ENCODE measurements at regions of chr7 and their contacts with region 1.

Region 1: GRCh38 chr7:74494076-74494548 is 40.4 kb downstream of the GTF2IRD1 start:
- DNase-seq: peak; percentile 65
- ATAC-seq: peak; percentile 84
- H3K4me3 ChIP-seq: peak overlapping the region in 2 of 3 experiments; percentile 2 to 48; a peak in 2 of 6 replicates
- H3K27ac ChIP-seq: peak overlapping the region; percentile 92
- H3K4me1 ChIP-seq: peaks cover 32% of the 10 kb centered on the region
- H3K27me3 ChIP-seq: no peaks in the 10 kb centered on the region
- CTCF ChIP-seq: no peak
- EP300 ChIP-seq: peak in 1 of 2 experiments; percentile 20; a peak in 1 of 4 replicates
- POLR2A ChIP-seq: no peak
- RAD21 ChIP-seq: 0 out of 2 replicates have a peak, but pooled peaks have one; percentile 15

Region 2: GRCh38 chr7:74455291-74455804 is 38.8 kb before region 1 on chr7:
- CTCF ChIA-PET with region 1: no interaction called
- POLR2A ChIA-PET with region 1: no interaction called
- in situ Hi-C with region 1: no loop called
- intact Hi-C with region 1: loop called (anchors 1 kb)
- DNase-seq: peak; percentile 56
- ATAC-seq: peak; percentile 55
- H3K4me3 ChIP-seq: peak overlapping the region; percentile 59 to 86 (median 66)
- H3K27ac ChIP-seq: peak overlapping the region; percentile 73
- H3K4me1 ChIP-seq: peaks cover 29% of the 10 kb centered on the region
- H3K27me3 ChIP-seq: no peaks in the 10 kb centered on the region
- CTCF ChIP-seq: no peak
- EP300 ChIP-seq: peak in 1 of 2 experiments; percentile 27; a peak in 1 of 4 replicates
- POLR2A ChIP-seq: no peak
- RAD21 ChIP-seq: no peak

Measured in HepG2 (cell line).